GM12878 (cell line): ENCODE measurements at regions of chr16 and their contacts with region 1.

Region 1: GRCh38 chr16:30183233-30184095 is at the start of gene CORO1A:
- DNase-seq: peak; percentile 32
- ATAC-seq: peak; percentile 51
- H3K4me3 ChIP-seq: peak within 1 kb of the TSS; percentile 96
- H3K27ac ChIP-seq: peak within 1 kb of the TSS; percentile 100
- H3K4me1 ChIP-seq: peaks cover 28% of the 10 kb centered on the region
- H3K27me3 ChIP-seq: no peaks in the 10 kb centered on the region
- CTCF ChIP-seq: no peak
- EP300 ChIP-seq: no peak
- POLR2A ChIP-seq: peak; percentile 62
- RAD21 ChIP-seq: no peak
- polyA plus RNA-seq, gene CORO1A: 16.3 to 35.3 TPM

Region 2: DNA sequence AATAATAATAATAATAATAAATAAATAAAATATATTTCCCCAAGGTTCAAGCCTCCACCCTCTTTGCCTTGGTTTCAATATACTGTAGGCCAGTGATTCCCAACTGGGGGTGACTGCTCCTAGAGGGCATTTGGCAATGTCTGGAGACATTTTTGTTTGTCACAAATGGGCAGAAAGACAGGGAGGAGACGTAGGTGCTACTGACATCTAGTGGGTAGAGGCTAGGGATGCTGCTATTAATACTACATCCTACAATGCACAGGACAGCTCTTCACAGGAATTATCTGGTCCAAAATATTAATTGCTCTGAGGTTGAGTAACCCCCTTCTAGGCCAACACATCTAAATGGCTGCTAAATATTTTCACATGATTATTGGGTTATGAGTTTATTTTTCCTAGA is 454.5 kb after region 1 on chr16:
- CTCF ChIA-PET with region 1: no interaction called
- POLR2A ChIA-PET with region 1: no interaction called
- RAD21 ChIA-PET with region 1: no interaction called
- SMC1A ChIA-PET with region 1: no interaction called
- in situ Hi-C with region 1: loop called (anchors 10 kb)
- intact Hi-C with region 1: no loop called
- DNase-seq: no peak
- ATAC-seq: peak; percentile 38
- H3K4me3 ChIP-seq: no peak overlapping the region
- H3K27ac ChIP-seq: no peak overlapping the region
- H3K4me1 ChIP-seq: no peaks in the 10 kb centered on the region
- H3K27me3 ChIP-seq: no peaks in the 10 kb centered on the region
- CTCF ChIP-seq: peak; percentile 61 to 70 (median 63); a peak in 5 of 6 replicates
- EP300 ChIP-seq: no peak
- POLR2A ChIP-seq: no peak
- RAD21 ChIP-seq: peak; percentile 58

Region 3: GRCh38 chr16:30698139-30698815 is 514.8 kb after region 1 on chr16:
- CTCF ChIA-PET with region 1: no interaction called
- POLR2A ChIA-PET with region 1: no interaction called
- RAD21 ChIA-PET with region 1: no interaction called
- SMC1A ChIA-PET with region 1: no interaction called
- in situ Hi-C with region 1: loop called (anchors 10 kb)
- intact Hi-C with region 1: no loop called
- DNase-seq: peak; percentile 89
- ATAC-seq: peak; percentile 82
- H3K4me3 ChIP-seq: peak overlapping the region; percentile 78
- H3K27ac ChIP-seq: peak overlapping the region; percentile 98
- H3K4me1 ChIP-seq: peaks cover 10% of the 10 kb centered on the region
- H3K27me3 ChIP-seq: no peaks in the 10 kb centered on the region
- CTCF ChIP-seq: no peak
- EP300 ChIP-seq: peak in 1 of 2 experiments; percentile 57; a peak in 1 of 4 replicates
- POLR2A ChIP-seq: peak; percentile 95
- RAD21 ChIP-seq: no peak